ENCODE measurements at regions of chr10 and their contacts with region 1.

Region 1: DNA sequence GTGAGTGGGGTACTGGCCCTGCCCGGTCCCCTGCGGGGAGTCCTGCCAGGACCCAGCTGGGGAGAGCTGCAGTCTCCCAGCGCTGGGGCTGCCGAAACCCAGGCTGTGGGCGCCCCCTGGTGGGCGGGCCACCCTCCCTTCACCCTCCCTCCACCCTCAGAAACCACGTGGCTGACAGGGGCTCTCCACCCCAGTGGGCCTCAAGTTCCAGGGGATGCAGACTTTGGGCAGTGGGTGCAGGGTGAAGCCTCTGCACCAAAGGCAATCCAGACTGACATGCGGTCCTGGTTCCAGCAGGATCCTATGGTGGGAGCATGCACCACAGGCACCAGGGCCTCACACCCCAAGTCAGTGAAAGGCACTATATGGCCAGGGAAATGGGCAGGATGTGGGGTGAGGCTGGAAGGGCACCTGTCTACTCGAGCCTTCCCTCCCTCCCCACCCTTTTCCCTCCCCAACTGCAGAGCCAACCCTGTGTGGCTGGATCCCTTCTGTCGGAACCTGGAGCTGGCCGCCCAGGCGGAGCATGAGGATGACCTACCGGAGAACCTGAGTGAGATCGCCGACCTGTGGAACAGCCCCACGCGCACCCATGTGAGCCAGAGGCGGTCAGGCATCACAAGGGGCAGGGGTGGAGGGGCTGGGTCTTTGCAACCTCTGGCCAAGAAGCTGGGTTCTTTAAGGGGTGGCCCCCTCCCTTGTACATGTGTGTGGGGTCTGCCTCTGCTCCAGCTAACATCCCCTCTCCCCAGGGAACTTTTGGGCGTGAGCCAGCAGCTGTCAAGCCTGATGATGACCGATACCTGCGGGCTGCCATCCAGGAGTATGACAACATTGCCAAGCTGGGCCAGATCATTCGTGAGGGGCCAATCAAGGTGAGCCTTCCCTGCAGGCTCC is 38.8 kb downstream of the PSAP start:
- DNase-seq: no peak
- H3K4me3 ChIP-seq: no peak overlapping the region
- H3K27me3 ChIP-seq: no peaks in the 10 kb centered on the region; the same call in 1 of the 2 replicates
- CTCF ChIP-seq: peak; percentile 94

Region 2: DNA sequence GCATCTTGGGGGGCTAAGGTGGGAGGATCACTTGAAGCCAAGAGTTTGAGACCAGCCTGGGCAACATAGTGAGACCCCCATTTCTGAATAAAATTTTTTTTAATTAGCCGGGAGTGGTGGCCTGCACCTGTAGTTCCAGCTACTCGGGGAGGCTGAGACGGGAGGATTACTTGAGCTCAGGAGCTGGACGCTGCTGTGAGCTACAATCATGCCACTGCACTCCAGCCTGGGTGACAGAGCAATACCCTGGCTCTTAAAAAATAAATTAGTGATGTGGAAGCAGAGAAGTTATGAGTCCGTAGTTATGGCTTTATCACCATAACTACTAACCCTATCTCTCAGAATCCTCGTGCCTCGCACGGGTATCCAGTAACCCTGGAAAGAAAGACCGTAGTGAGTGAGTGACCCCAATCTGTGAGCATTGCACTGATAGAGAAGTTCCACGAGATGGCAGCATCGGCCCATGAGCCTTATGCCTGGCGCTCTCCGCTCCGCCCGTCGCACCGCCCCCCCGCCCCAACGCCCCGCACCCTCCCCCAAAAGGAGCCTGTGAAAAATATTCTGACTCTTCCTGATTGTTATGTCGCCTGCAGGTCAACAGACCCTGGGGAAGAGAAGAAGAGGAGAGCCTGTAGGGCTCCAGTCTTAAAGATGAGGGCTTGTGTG is 498.1 kb before region 1 on chr10:
- CTCF ChIA-PET with region 1: interaction called, 15 read pairs
- POLR2A ChIA-PET with region 1: no interaction called
- DNase-seq: no peak
- H3K4me3 ChIP-seq: no peak overlapping the region
- H3K27me3 ChIP-seq: no peaks in the 10 kb centered on the region
- CTCF ChIP-seq: peak; percentile 86

Region 3: DNA sequence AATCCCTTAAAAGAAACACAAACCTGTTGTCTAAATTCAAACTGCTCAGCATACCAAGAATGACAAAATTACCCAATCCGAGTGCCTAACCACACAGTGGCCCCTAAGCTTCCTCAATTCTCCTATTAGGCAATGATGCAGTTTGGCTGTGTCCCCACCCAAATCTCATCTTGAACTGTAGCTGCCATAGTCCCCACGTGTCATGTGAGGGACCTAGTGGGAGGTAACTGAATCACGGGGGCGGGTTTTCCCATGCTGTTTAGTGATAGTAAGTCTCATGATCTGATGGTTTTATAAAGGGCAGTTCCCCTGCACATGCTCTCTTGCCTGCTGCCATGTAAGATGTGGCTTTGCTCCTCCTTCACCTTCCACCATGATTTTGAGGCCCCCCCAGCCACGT is 16.9 kb after region 1 on chr10:
- CTCF ChIA-PET with region 1: interaction called, 14 read pairs
- POLR2A ChIA-PET with region 1: no interaction called
- DNase-seq: no peak
- H3K4me3 ChIP-seq: no peak overlapping the region
- H3K27me3 ChIP-seq: no peaks in the 10 kb centered on the region
- CTCF ChIP-seq: no peak